GM12878 (cell line): ENCODE measurements at regions of chr12 and their contacts with region 1.

Region 1: DNA sequence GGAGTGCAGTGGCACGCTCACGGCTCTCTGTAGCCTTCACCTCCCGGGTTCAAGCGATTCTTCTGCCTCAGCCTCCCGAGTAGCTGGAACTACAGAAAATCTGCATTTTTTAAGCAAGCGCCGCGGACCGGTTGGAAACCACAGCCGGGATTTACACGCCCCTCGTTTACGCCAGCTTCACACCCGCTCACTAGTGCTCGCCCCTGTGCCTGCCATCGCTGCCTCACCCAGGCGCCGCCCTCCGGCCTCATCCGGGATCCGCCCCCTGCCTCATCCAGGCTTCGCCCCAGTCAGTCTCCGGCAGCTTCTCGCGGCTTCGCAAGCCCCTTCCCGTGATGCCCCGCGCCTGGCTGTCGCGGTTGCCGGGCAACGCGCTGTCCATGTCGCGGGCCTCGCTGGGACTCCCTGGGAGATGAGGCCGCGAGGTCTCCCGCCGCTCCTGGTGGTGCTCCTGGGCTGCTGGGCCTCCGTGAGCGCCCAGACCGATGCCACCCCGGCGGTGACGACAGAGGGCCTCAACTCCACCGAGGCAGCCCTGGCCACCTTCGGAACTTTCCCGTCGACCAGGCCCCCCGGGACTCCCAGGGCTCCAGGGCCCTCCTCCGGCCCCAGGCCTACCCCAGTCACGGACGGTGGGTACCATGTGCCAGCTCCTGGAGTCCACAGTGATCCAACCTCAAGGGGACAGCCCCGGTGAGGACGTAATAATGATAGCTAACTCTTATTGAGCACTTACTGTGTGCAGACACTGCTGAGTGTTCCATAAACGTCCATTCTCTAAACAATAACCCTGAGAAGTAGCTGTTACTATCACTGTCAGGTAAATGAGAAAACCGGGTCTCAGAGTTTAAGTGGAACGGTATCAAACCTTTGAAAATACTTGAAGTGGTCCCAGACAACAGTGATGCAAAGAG is at the start of gene TCTN1:
- DNase-seq: peak; percentile 70
- ATAC-seq: peak; percentile 99
- H3K4me3 ChIP-seq: peak within 1 kb of the TSS; percentile 58
- H3K27ac ChIP-seq: peak within 1 kb of the TSS; percentile 64
- H3K4me1 ChIP-seq: peaks cover 17% of the 10 kb centered on the region
- H3K27me3 ChIP-seq: no peaks in the 10 kb centered on the region
- CTCF ChIP-seq: no peak
- EP300 ChIP-seq: no peak
- POLR2A ChIP-seq: peak; percentile 95
- RAD21 ChIP-seq: no peak
- polyA plus RNA-seq, gene TCTN1: 8.8 to 10.2 TPM

Region 2: DNA sequence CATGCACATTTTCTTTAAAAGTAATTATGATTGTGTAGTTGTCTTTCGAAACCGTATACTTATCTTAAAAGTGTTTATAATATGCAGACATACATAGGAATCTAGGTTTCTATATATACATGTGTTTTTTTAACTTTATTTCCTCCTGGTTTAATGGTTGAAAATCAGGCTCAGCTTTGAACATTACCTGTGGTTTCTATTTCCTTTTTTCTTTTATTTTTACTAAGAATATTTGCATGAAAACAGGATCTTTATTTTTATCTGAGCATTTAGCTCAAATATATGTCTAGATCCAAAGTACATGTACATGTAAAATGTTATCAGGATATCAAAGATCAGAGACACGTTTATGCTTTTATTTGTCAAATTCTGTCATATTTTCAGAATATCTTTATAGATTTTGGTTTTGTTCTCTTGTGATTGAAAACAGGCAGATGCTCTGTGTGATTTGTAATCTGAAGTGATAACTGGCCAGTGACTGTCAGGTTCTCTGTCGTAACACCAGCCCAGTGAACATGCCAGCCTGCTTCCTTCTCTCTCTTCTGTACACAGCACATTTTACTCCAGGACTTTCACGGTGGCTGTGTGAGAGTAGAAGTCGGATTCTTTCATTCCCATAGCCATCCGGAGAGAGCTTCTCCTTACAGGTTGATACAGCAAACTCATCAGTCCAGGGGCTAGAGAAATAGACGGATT is 13.6 kb after region 1 on chr12:
- CTCF ChIA-PET with region 1: interaction called, 46 read pairs
- POLR2A ChIA-PET with region 1: interaction called, 46 read pairs
- RAD21 ChIA-PET with region 1: interaction called, 23 read pairs
- SMC1A ChIA-PET with region 1: interaction called, 103 read pairs
- in situ Hi-C with region 1: no loop called
- intact Hi-C with region 1: no loop called
- DNase-seq: no peak
- ATAC-seq: peak; percentile 77
- H3K4me3 ChIP-seq: peak overlapping the region; percentile 23; the same call in 1 of the 2 replicates
- H3K27ac ChIP-seq: peak overlapping the region; percentile 16
- H3K4me1 ChIP-seq: peaks cover 11% of the 10 kb centered on the region
- H3K27me3 ChIP-seq: no peaks in the 10 kb centered on the region
- CTCF ChIP-seq: no peak
- EP300 ChIP-seq: no peak
- POLR2A ChIP-seq: no peak
- RAD21 ChIP-seq: no peak

Region 3: GRCh38 chr12:110670161-110670701 is 56.2 kb after region 1 on chr12:
- CTCF ChIA-PET with region 1: interaction called, 24 read pairs
- POLR2A ChIA-PET with region 1: interaction called, 11 read pairs
- RAD21 ChIA-PET with region 1: interaction called, 21 read pairs
- SMC1A ChIA-PET with region 1: interaction called, 49 read pairs
- in situ Hi-C with region 1: no loop called
- intact Hi-C with region 1: loop called (anchors 2 kb)
- DNase-seq: peak; percentile 95
- ATAC-seq: peak; percentile 63
- H3K4me3 ChIP-seq: peak overlapping the region; percentile 82; the same call in 1 of the 2 replicates
- H3K27ac ChIP-seq: peak overlapping the region; percentile 99
- H3K4me1 ChIP-seq: peaks cover 76% of the 10 kb centered on the region
- H3K27me3 ChIP-seq: no peaks in the 10 kb centered on the region
- CTCF ChIP-seq: no peak
- EP300 ChIP-seq: peak; percentile 81 to 95
- POLR2A ChIP-seq: no peak; the same call in 1 of the 2 replicates
- RAD21 ChIP-seq: 0 out of 2 replicates have a peak, but pooled peaks have one; percentile 6

Region 4: DNA sequence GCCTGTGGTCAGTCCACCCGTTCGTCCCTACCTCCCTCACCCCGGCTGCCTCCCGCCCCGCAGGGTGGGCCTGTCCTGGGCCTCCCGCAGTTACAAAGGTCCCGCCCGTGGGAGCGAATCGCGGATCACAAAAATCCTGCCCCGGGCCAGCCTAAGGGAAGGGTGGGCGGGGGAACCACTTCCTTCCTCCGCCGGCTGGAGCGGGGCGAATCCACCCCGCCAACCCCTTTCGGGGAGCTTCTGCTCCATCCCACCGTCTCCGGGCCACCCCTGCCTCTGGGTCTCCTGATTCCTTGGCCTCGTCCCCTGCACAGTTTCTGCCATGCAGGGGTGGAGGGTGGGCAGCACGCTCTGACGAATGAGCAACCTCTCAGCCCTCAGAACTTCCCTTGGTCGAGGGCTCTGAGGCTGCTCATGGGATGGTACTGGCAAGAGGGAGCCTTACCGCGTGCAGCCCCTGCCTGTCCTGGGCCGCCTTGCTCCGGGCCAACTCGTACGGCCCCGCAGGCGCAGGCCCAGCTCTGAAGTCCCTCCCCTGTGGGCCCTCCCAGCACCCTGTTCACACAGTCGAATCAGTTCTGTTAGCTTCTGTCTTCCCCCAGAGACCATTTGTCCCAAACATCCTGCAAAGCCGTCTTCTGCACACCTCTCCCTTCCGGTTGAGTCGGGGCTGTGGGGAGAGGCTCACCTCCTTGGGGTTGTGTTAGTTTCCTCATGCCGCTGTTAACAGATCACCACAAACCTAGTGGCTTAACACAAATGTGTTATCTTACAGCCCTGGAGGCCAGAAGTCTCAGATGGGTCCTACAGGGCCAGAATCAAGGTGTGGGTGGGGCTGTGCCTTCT is 75.5 kb after region 1 on chr12:
- CTCF ChIA-PET with region 1: interaction called, 25 read pairs
- POLR2A ChIA-PET with region 1: interaction called, 12 read pairs
- RAD21 ChIA-PET with region 1: interaction called, 9 read pairs
- SMC1A ChIA-PET with region 1: interaction called, 27 read pairs
- in situ Hi-C with region 1: no loop called
- intact Hi-C with region 1: no loop called
- DNase-seq: peak; percentile 57
- ATAC-seq: peak; percentile 75
- H3K4me3 ChIP-seq: peak overlapping the region; percentile 66
- H3K27ac ChIP-seq: peak overlapping the region; percentile 85
- H3K4me1 ChIP-seq: peaks cover 38% of the 10 kb centered on the region
- H3K27me3 ChIP-seq: no peaks in the 10 kb centered on the region
- CTCF ChIP-seq: no peak
- EP300 ChIP-seq: no peak
- POLR2A ChIP-seq: peak; percentile 89
- RAD21 ChIP-seq: no peak